AG04450 (cell line): ENCODE measurements at regions of chr15 and their contacts with region 1.

Region 1: DNA sequence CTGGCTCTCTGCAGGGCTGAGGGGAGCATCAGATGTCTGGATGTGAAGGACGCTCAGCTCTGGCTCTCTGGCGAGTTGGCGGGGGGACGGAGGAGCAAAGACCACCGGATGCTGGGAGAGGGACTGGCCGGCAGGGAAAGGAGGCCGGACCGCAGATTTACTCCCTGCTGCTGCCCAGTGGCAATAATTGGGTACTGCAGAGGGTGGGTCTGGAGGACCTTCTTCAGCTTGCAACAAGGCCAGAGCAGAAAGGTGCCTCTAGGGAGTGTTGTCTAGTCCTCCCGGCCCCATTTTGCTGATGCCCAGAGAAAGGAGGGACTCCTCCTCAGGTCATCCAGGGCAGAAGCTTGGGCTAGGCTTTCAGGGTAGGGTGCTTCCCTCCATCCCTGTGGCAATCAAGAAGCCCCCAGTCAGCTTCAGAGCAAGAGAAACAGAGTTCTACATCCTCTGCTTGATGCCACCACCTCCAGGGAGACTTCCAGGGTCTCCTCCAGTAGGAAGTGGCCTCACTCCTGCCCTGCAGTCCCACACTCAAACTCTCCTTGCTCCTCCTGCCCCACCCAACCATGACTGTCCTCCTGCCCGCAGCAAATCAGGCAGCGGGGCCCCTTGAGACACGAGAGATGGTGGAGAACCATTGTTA is 20.3 kb upstream of the CSPG4 start:
- DNase-seq: no peak
- H3K4me3 ChIP-seq: no peak overlapping the region
- H3K27ac ChIP-seq: no peak overlapping the region
- H3K27me3 ChIP-seq: no peaks in the 10 kb centered on the region
- CTCF ChIP-seq: peak; percentile 86

Region 2: DNA sequence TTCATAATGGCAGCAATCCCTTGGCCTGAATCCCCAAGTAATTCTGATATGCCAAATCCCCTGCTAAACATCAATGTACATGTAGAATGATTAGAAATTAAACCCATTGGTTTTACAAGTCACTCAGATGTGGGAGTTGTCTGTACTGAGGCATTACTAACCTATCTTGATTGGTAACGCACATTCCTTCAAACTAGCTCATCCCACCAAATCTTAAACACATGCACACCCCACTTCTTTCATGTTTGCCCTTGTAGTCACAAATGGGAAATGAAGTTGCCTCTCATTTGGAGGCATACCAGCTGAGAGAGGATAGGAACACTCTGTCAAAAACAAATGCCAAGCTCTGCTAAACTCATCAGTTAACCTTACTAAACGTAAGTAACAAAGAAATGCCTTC is 335.4 kb before region 1 on chr15:
- CTCF ChIA-PET with region 1: no interaction called
- POLR2A ChIA-PET with region 1: no interaction called
- DNase-seq: no peak
- H3K4me3 ChIP-seq: no peak overlapping the region
- H3K27ac ChIP-seq: no peak overlapping the region
- H3K27me3 ChIP-seq: no peaks in the 10 kb centered on the region
- CTCF ChIP-seq: no peak

Region 3: GRCh38 chr15:75684642-75685041 is 48.3 kb before region 1 on chr15:
- CTCF ChIA-PET with region 1: interaction called, 10 read pairs
- POLR2A ChIA-PET with region 1: interaction called, 6 read pairs
- DNase-seq: no peak
- H3K4me3 ChIP-seq: no peak overlapping the region
- H3K27ac ChIP-seq: no peak overlapping the region
- H3K27me3 ChIP-seq: no peaks in the 10 kb centered on the region
- CTCF ChIP-seq: no peak

Region 4: DNA sequence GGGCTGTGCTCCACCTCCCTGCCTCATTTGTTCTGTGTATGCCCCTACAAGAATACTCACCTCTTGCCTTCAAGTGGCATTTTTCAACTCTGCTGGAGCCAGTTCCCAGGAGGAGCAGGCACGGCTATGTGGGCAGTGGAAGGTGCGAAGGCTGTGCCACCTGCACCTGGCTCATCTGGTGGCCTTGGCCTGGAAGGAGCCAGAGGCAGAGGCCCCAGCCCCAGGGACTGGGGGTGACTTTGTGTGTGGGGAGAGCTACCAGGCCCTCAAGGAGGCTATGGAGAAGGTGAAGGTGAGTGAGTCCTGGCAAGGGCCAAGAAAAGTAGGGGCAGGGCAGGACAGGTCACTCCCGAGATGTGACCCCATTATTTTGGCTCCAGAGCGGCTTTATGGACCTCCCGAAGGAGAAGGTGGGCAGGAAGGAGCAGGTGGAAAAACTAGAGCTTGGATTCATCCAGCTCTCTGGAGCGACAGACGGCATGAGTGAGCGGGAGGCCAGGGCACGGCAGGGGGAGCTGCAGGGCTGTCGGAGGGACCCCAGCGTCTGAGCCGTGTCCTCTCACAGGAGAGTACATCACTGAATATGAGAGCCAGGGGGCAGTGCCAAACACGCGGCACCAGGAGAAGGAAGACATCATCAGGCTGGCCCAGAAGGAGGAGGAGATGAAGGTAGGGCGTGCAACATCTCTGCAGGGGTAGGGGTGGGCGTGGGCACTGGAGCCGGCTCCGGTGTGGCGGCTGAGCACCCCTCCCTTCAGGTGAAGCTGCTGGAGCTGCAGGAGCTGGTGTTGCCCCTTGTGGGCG is 53.0 kb after region 1 on chr15:
- CTCF ChIA-PET with region 1: no interaction called
- POLR2A ChIA-PET with region 1: no interaction called
- DNase-seq: no peak
- H3K4me3 ChIP-seq: no peak overlapping the region
- H3K27ac ChIP-seq: no peak overlapping the region
- H3K27me3 ChIP-seq: peaks cover 52% of the 10 kb centered on the region
- CTCF ChIP-seq: peak; percentile 20; the same call in 1 of the 2 replicates